Ascending aorta (tissue), 2 donors: ENCODE measurements at regions of chrX and their contacts with region 1.

Region 1: GRCh38 chrX:87517571-87518141 is at the start of gene KLHL4:
- DNase-seq: no peak
- H3K4me3 ChIP-seq: peak within 1 kb of the TSS; percentile 40 to 58
- H3K27ac ChIP-seq: peak within 1 kb of the TSS in 1 of 2 donors; percentile 16
- H3K4me1 ChIP-seq: no peaks in the 10 kb centered on the region
- H3K27me3 ChIP-seq: no peaks in the 10 kb centered on the region
- CTCF ChIP-seq: no peak
- total RNA-seq, gene KLHL4: 0.21 TPM

Region 2: DNA sequence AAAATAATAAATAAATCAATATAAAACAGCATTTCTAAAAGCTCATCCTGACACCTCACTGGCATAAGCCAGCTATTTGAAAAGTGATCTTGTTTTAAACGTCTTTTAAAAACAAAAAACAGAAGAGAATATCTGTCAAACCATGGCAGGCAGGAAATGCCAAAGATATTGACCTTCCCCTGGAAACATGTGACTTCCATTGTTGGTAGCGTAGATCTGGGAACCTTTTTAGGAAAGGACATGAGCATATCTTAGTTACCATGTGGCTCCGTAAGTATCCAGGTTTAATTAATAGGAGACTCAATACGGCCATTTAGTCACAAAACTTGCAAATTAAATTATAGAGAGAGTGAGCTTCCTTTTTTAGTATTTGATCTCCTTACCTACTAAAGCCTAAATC is 83.0 kb before region 1 on chrX:
- intact Hi-C with region 1: loop called (anchors 2 kb)
- DNase-seq: no peak
- H3K4me3 ChIP-seq: no peak overlapping the region
- H3K27ac ChIP-seq: no peak overlapping the region
- H3K4me1 ChIP-seq: no peaks in the 10 kb centered on the region
- H3K27me3 ChIP-seq: no peaks in the 10 kb centered on the region
- CTCF ChIP-seq: no peak

Region 3: GRCh38 chrX:87468941-87469340 is 48.7 kb before region 1 on chrX:
- intact Hi-C with region 1: no loop called
- DNase-seq: no peak
- H3K4me3 ChIP-seq: no peak overlapping the region
- H3K27ac ChIP-seq: no peak overlapping the region
- H3K4me1 ChIP-seq: no peaks in the 10 kb centered on the region
- H3K27me3 ChIP-seq: no peaks in the 10 kb centered on the region
- CTCF ChIP-seq: no peak

Region 4: GRCh38 chrX:88584283-88584682 is 1066.6 kb after region 1 on chrX:
- intact Hi-C with region 1: no loop called
- DNase-seq: no peak
- H3K4me3 ChIP-seq: no peak overlapping the region
- H3K27ac ChIP-seq: no peak overlapping the region
- H3K4me1 ChIP-seq: no peaks in the 10 kb centered on the region
- H3K27me3 ChIP-seq: no peaks in the 10 kb centered on the region
- CTCF ChIP-seq: no peak